Naive thymus-derived CD4-positive, alpha-beta T cell (primary cell): ENCODE measurements at regions of chr2 and their contacts with region 1.

Region 1: DNA sequence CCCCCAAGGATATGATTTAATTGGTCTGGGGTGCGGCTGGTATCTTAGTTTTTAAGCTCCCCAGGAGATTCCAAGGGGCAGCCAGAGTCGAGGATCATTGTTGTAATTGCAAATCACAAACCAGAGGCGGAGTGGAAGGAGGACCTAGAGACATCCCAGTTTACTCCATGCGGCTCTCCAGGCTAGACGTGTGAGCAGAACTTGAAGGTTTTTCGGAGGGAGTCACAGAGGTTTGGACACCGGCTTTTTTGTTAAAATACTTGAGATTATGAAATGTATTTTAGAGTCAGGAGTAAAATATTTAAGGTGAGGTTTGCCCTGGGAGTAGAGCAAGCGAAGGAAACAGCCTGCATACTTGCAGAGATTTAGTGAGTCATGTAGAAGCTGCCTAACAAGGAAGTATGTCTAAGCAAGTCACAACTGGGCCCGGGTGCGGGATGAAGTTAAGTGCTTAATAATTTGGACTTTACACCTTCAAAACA is 39.5 kb downstream of the TGOLN2 start:
- DNase-seq: no peak
- ATAC-seq: no peak
- H3K4me3 ChIP-seq: no peak overlapping the region
- H3K4me3 Mint-ChIP-seq: no peak overlapping the region
- H3K27ac ChIP-seq: no peak overlapping the region
- H3K27ac Mint-ChIP-seq: no peak overlapping the region
- H3K4me1 ChIP-seq: peaks cover 5 to 9% of the 10 kb centered on the region in 2 donors
- H3K4me1 Mint-ChIP-seq: peaks cover 14 to 31% (median 25%) of the 10 kb centered on the region in 7 donors
- H3K27me3 ChIP-seq: no peaks in the 10 kb centered on the region
- H3K27me3 Mint-ChIP-seq: no peaks in the 10 kb centered on the region

Region 2: GRCh38 chr2:84314901-84315330 is 973.4 kb before region 1 on chr2:
- CTCF ChIA-PET with region 1: interaction called, 10 read pairs
- POLR2A ChIA-PET with region 1: no interaction called
- intact Hi-C with region 1: no loop called
- DNase-seq: peak; percentile 44 to 76 (median 69)
- ATAC-seq: peak; percentile 81
- H3K4me3 ChIP-seq: no peak overlapping the region
- H3K4me3 Mint-ChIP-seq: peak overlapping the region in 1 of 10 donors; percentile 9
- H3K27ac ChIP-seq: no peak overlapping the region
- H3K27ac Mint-ChIP-seq: no peak overlapping the region
- H3K4me1 ChIP-seq: no peaks in the 10 kb centered on the region
- H3K4me1 Mint-ChIP-seq: peaks cover 2 to 6% (median 5%) of the 10 kb centered on the region in 7 donors
- H3K27me3 ChIP-seq: no peaks in the 10 kb centered on the region
- H3K27me3 Mint-ChIP-seq: peaks cover 4 to 19% (median 12%) of the 10 kb centered on the region in 5 donors

Region 3: GRCh38 chr2:85017411-85018048 is 270.8 kb before region 1 on chr2:
- CTCF ChIA-PET with region 1: interaction called, 9 read pairs
- POLR2A ChIA-PET with region 1: no interaction called
- intact Hi-C with region 1: loop called in 1 of 2 experiments (anchors 1 kb)
- DNase-seq: peak in 4 of 9 donors; percentile 17 to 30 (median 24)
- ATAC-seq: no peak
- H3K4me3 ChIP-seq: no peak overlapping the region
- H3K4me3 Mint-ChIP-seq: peak overlapping the region in 4 of 10 donors; percentile 5 to 39 (median 32)
- H3K27ac ChIP-seq: no peak overlapping the region
- H3K27ac Mint-ChIP-seq: peak overlapping the region in 8 of 9 donors; percentile 8 to 67 (median 38)
- H3K4me1 ChIP-seq: peaks cover 2 to 15% of the 10 kb centered on the region in 2 donors
- H3K4me1 Mint-ChIP-seq: peaks cover 41 to 78% (median 66%) of the 10 kb centered on the region in 7 donors
- H3K27me3 ChIP-seq: no peaks in the 10 kb centered on the region
- H3K27me3 Mint-ChIP-seq: no peaks in the 10 kb centered on the region

Region 4: DNA sequence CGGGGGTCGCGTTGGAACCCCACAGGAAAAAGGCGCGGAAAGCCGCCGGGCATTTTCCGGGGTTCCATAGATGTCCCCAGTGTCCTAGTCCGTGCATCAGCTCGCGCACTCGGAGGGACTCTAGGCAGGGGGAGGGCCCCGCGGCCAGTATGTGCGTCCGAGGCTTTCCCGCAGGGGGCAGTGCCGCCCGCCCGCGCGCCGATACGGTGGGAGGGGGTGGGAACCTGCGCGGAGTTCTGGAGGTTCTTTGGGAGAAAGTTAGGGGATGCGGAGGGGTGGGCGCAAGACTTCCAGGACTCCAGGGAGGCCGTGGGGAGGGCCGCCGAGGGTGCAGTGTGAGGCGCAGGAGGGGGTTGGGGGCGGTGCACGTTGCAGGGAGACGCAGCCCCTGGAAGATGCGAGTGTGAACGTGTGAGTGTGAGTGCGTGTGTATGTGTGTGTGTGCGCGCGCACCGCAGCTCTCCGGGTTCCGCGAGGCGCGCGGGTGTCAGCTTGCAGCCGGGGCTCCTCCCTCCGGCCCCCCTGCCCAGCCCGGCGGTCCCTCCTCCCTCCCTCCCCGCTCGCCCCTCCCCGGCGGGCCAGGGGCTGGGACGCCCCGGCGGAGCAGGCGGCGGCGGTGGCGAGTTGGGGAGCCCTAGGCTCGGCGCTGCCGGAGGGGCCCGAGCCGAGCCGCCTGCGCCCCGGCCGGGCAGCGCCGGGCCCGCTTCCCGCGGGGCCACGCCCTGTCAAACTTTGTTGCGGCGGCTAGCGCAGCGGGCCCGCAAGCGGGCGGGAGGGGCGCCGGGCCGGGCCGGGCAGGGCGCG is 155.2 kb before region 1 on chr2 and contains the start of gene TCF7L1:
- CTCF ChIA-PET with region 1: no interaction called
- POLR2A ChIA-PET with region 1: no interaction called
- intact Hi-C with region 1: loop called in 1 of 2 experiments (anchors 5 kb)
- DNase-seq: peak in 6 of 9 donors; percentile 5 to 50 (median 14)
- ATAC-seq: peak; percentile 61
- H3K4me3 ChIP-seq: peak within 1 kb of the TSS; percentile 48
- H3K4me3 Mint-ChIP-seq: peak within 1 kb of the TSS; percentile 59 to 88 (median 74)
- H3K27ac ChIP-seq: no peak within 1 kb of the TSS
- H3K27ac Mint-ChIP-seq: no peak within 1 kb of the TSS
- H3K4me1 ChIP-seq: peaks cover 0 to 5% of the 10 kb centered on the region in 2 donors
- H3K4me1 Mint-ChIP-seq: peaks cover 5 to 18% (median 10%) of the 10 kb centered on the region in 7 donors
- H3K27me3 ChIP-seq: peaks cover 0 to 25% of the 10 kb centered on the region in 2 donors
- H3K27me3 Mint-ChIP-seq: peaks cover 45 to 74% (median 53%) of the 10 kb centered on the region in 5 donors
- total RNA-seq, gene TCF7L1: 0.16 TPM in 1 of 5 experiments, not detected in the others

Region 5: GRCh38 chr2:85266146-85267041 is 21.9 kb before region 1 on chr2:
- CTCF ChIA-PET with region 1: interaction called, 16 read pairs
- POLR2A ChIA-PET with region 1: interaction called, 3 read pairs
- intact Hi-C with region 1: loop called (anchors 1 kb)
- DNase-seq: peak; percentile 27 to 76 (median 48)
- ATAC-seq: peak; percentile 78
- H3K4me3 ChIP-seq: no peak overlapping the region
- H3K4me3 Mint-ChIP-seq: no peak overlapping the region
- H3K27ac ChIP-seq: no peak overlapping the region
- H3K27ac Mint-ChIP-seq: peak overlapping the region in 1 of 9 donors; percentile 21
- H3K4me1 ChIP-seq: no peaks in the 10 kb centered on the region
- H3K4me1 Mint-ChIP-seq: peaks cover 0 to 2% (median 0%) of the 10 kb centered on the region in 7 donors
- H3K27me3 ChIP-seq: no peaks in the 10 kb centered on the region
- H3K27me3 Mint-ChIP-seq: peaks cover 0 to 26% (median 0%) of the 10 kb centered on the region in 5 donors

Region 6: DNA sequence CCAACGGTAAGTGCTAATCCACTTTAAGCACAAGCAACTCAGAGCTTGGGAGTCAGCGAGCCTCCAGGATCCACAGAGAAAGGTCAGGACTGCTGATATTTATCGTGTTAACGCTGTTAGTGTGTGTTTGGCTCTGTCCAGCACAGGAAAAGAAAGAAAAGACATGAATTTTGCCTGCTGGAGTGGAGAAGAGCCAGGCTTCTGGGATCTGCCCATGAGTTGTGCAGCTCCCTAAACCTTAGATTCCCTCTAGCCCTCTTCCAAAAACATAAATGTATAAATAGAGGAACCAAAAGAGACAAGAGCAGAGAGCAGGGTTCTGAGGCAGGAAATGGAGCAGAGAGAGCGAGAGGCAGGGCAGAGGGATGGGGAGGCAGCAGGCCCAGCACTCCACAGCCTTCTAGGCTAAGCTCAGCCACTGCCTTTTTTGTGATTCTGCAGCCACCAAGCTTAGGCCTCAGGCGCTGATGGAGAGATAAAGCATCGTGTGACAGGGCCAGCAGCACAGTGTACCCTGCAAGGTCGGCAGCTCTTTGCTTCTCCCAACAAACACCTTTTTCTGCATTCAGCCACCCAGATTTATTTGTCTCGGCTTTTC is 236.2 kb after region 1 on chr2:
- CTCF ChIA-PET with region 1: no interaction called
- POLR2A ChIA-PET with region 1: no interaction called
- intact Hi-C with region 1: no loop called
- DNase-seq: no peak
- ATAC-seq: peak; percentile 32
- H3K4me3 ChIP-seq: no peak overlapping the region
- H3K4me3 Mint-ChIP-seq: no peak overlapping the region
- H3K27ac ChIP-seq: no peak overlapping the region
- H3K27ac Mint-ChIP-seq: peak overlapping the region in 1 of 9 donors; percentile 40
- H3K4me1 ChIP-seq: no peaks in the 10 kb centered on the region
- H3K4me1 Mint-ChIP-seq: peaks cover 0 to 5% (median 0%) of the 10 kb centered on the region in 7 donors
- H3K27me3 ChIP-seq: no peaks in the 10 kb centered on the region
- H3K27me3 Mint-ChIP-seq: peaks cover 0 to 26% (median 5%) of the 10 kb centered on the region in 5 donors